Ascending aorta (tissue), 2 donors: ENCODE measurements at regions of chr12 and their contacts with region 1.

Region 1: DNA sequence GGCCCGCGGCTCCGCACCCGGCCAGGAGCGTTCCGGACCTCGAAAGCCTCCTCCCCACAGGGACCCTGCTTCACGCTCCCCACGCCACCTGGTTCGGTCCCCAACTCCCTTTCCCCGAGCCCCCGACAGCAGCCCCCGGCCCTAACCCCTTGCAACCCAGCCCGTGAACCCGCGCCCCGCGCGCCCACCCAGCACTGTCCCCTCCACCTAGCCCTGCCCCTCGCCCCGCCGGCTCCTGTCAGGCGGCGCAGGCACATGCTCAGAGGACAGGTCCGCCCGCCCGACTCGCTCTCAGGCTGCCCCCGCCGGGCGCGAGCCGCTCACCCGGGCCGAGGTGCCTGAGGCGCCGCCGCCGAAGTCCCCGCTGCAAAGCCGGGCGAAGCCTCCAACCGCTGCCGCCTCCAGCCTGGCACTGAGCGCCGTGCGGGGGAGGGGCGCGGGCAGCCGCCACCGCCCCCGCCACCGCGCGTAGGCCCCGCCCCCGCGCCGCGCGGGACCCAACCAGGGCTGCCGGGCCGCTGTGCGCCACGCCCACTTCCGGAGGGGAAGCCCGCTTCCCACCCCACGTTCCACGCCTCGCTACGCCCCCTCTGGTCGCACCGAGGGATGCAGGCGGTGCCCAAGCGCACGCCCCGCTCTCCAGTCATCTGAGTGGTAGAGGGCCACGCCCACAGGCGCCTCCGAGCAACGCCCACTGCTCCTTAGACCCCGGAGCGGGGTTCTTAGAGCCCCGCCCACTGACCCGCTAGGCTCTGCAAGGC is at the start of gene CORO1C:
- DNase-seq: peak; percentile 84 to 98
- H3K4me3 ChIP-seq: peak within 1 kb of the TSS; percentile 66 to 79
- H3K27ac ChIP-seq: peak within 1 kb of the TSS; percentile 94 to 96
- H3K4me1 ChIP-seq: peaks cover 0 to 30% of the 10 kb centered on the region in 2 donors
- H3K27me3 ChIP-seq: no peaks in the 10 kb centered on the region
- CTCF ChIP-seq: peak; percentile 82 to 94 (median 83)
- total RNA-seq, gene CORO1C: 106 TPM

Region 2: DNA sequence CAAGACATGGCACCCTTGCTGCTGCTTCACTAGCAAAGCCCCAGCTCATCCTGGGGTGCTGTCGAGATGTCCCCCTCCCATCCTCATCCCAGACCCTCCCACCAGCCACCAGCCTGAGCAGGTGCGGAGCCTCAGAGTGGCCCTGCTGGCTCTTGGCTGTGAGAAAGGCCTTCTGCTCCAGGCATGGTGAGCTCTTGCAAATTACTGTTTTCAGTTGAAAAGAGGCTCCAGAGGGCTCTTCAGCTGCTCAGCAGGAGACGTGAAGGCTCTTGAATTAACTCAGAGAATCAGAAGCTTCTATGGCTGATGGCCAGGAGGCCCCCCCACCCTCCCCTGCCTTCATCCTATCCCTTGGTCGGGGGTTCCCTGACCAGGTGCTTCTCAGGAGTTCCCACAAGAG is 558.1 kb before region 1 on chr12:
- intact Hi-C with region 1: no loop called
- DNase-seq: no peak
- H3K4me3 ChIP-seq: no peak overlapping the region
- H3K27ac ChIP-seq: no peak overlapping the region
- H3K4me1 ChIP-seq: peaks cover 0 to 6% of the 10 kb centered on the region in 2 donors
- H3K27me3 ChIP-seq: no peaks in the 10 kb centered on the region
- CTCF ChIP-seq: no peak

Region 3: GRCh38 chr12:108337235-108338223 is 393.8 kb before region 1 on chr12:
- intact Hi-C with region 1: loop called (anchors 5 kb)
- DNase-seq: peak in 1 of 2 donors; percentile 73
- H3K4me3 ChIP-seq: peak overlapping the region; percentile 48 to 59
- H3K27ac ChIP-seq: peak overlapping the region; percentile 88 to 96
- H3K4me1 ChIP-seq: peaks cover 21 to 63% of the 10 kb centered on the region in 2 donors
- H3K27me3 ChIP-seq: no peaks in the 10 kb centered on the region
- CTCF ChIP-seq: peak; percentile 44 to 61 (median 51)

Region 4: DNA sequence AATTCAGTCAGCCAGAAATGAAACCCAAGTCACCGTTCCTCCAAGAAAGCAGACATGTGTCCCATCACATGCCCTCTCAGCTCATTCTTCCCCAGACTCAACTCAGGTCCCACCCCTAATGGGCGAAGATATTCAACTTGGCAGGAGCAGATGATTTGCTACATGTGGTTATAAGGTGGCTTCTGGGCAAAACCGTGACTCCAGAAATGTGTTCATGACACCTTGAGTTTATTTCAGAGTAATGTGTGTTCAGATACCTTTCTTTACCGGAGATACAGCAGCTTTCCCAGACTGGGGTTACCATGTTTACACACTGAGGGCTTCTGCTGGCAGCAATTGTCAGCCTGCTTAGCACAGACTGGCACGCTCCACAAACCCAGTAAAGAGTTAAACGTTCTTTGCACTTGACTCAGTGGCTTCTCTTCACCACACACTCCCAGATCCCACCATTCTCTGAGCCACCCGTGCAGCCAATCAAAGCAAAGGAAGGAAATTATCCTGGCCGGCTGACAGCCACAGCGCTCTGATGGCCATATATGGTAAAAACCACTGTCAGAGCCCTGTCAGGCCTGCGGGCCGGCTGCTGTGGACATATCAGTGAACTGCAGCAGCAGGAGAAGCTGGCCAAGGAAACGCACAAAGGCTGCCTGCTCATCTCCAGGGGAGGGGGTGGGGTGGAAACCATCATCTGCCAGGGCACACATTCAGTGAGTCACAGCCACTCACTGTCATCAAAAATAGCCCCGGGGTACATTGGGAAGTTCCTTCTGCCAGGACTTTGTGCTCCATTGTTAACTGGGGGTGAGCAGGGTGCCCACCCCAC is 39.9 kb before region 1 on chr12:
- intact Hi-C with region 1: loop called (anchors 1 kb)
- DNase-seq: peak; percentile 93 to 98
- H3K4me3 ChIP-seq: peak overlapping the region; percentile 38 to 50
- H3K27ac ChIP-seq: peak overlapping the region; percentile 95 to 97
- H3K4me1 ChIP-seq: peaks cover 23 to 66% of the 10 kb centered on the region in 2 donors
- H3K27me3 ChIP-seq: no peaks in the 10 kb centered on the region
- CTCF ChIP-seq: peak; percentile 26 to 56 (median 42)

Region 5: DNA sequence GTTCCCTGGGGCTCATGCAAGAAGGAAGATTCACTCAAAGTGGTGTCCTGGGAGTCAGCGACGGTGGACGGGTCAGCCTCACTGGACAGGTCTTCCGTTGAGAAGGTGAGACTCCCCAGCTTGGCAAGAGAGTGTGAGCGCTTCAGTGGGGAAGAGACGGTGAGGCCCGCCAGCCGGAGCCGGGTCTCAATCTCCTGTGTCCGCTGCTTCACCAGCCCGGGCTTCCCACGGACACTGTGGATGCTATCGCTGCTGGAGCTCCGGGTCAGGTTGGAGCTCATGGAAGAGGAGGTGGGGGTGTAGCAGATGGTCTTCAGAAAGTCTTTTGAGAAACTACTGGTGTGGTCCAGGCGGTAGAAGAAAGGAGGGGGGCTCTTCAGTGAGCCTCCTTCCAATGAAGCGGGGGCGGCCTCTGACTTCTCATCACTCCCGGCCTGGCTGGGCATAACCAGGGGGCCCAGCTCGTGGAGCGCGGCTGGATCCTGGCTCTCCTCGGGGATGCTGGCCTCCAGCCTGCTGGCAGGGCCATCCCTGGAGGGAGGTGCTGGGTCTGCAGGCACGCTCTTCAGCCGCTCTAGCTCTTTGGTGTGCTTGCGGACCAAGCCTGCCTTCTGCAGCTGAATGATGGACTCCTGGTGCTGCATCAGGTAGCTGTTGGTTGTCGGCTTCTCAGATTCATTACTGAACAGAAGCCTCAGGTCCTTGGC is 56.9 kb after region 1 on chr12:
- intact Hi-C with region 1: loop called (anchors 5 kb)
- DNase-seq: no peak
- H3K4me3 ChIP-seq: no peak overlapping the region
- H3K27ac ChIP-seq: peak overlapping the region; percentile 8 to 52
- H3K4me1 ChIP-seq: peaks cover 6 to 26% of the 10 kb centered on the region in 2 donors
- H3K27me3 ChIP-seq: no peaks in the 10 kb centered on the region
- CTCF ChIP-seq: no peak

Region 6: GRCh38 chr12:108838194-108839017 is 107.1 kb after region 1 on chr12:
- intact Hi-C with region 1: loop called (anchors 1 kb)
- DNase-seq: peak; percentile 95 to 98
- H3K4me3 ChIP-seq: no peak overlapping the region
- H3K27ac ChIP-seq: peak overlapping the region; percentile 96 to 97
- H3K4me1 ChIP-seq: peaks cover 40 to 62% of the 10 kb centered on the region in 2 donors
- H3K27me3 ChIP-seq: no peaks in the 10 kb centered on the region
- CTCF ChIP-seq: no peak

Region 7: DNA sequence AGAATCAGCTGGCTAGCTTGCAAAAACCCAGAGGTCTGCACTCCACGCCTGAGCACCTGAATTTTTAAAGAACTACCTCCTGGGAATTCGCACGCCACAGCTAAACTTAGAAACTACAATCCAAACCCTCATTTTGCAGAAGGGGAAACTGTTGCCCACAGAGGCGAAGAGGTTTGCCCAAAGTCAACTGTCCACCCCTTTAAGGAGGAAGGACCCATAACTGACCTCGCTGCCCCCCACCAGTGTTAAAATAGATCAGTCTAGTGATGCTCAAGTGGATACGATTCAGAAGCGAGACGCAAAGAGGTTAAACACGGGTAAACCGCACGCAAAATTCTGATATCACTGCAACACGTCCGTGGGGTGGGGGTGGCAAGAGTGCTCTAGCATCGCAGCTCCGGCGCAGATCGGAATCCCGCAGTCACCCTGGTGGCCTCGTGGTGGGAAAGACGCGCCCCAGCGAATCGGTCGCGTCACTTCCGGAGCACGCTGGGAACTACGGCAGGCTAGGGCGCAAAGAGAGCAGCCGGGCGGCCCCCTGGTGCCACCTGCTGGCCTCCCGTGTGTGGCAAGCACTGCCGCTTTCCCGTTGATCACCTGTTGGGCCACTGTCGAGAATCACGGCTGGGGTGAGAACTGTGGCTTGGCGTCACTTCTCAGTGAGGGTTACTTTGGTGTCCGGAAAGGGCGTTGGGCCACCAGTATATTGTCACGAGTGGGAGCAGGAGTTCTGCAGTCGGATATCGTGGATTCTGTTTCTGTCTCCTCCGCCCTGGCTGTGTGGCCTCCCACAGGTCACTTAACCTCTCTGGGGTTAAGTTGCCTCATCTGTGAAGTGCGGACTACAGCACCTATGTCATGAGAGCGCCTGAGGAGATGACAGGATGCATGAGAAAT is 362.0 kb after region 1 on chr12 and contains the start of gene ALKBH2:
- intact Hi-C with region 1: loop called (anchors 5 kb)
- DNase-seq: peak; percentile 66 to 97
- H3K4me3 ChIP-seq: peak within 1 kb of the TSS; percentile 52 to 66
- H3K27ac ChIP-seq: peak within 1 kb of the TSS; percentile 54 to 58
- H3K4me1 ChIP-seq: peaks cover 8 to 26% of the 10 kb centered on the region in 2 donors
- H3K27me3 ChIP-seq: no peaks in the 10 kb centered on the region
- CTCF ChIP-seq: peak; percentile 93 to 99 (median 97)
- total RNA-seq, gene ALKBH2: 18.6 TPM